ENCODE measurements at regions of chr16 and their contacts with region 1.

Region 1: GRCh38 chr16:81403616-81404373 is 40.8 kb upstream of the CMIP start:
- DNase-seq: peak; percentile 72 to 83
- H3K4me3 ChIP-seq: peak overlapping the region in 2 of 3 donors; percentile 22 to 59
- H3K27ac ChIP-seq: no peak overlapping the region
- H3K4me1 ChIP-seq: peaks cover 0 to 3% of the 10 kb centered on the region in 2 donors
- H3K27me3 ChIP-seq: no peaks in the 10 kb centered on the region
- CTCF ChIP-seq: peak; percentile 91 to 97 (median 96)
- POLR2A ChIP-seq: no peak

Region 2: GRCh38 chr16:81703177-81704155 is 299.7 kb after region 1 on chr16:
- intact Hi-C with region 1: loop called (anchors 10 kb)
- DNase-seq: no peak
- H3K4me3 ChIP-seq: no peak overlapping the region
- H3K27ac ChIP-seq: no peak overlapping the region
- H3K4me1 ChIP-seq: no peaks in the 10 kb centered on the region
- H3K27me3 ChIP-seq: no peaks in the 10 kb centered on the region
- CTCF ChIP-seq: no peak
- POLR2A ChIP-seq: no peak

Region 3: DNA sequence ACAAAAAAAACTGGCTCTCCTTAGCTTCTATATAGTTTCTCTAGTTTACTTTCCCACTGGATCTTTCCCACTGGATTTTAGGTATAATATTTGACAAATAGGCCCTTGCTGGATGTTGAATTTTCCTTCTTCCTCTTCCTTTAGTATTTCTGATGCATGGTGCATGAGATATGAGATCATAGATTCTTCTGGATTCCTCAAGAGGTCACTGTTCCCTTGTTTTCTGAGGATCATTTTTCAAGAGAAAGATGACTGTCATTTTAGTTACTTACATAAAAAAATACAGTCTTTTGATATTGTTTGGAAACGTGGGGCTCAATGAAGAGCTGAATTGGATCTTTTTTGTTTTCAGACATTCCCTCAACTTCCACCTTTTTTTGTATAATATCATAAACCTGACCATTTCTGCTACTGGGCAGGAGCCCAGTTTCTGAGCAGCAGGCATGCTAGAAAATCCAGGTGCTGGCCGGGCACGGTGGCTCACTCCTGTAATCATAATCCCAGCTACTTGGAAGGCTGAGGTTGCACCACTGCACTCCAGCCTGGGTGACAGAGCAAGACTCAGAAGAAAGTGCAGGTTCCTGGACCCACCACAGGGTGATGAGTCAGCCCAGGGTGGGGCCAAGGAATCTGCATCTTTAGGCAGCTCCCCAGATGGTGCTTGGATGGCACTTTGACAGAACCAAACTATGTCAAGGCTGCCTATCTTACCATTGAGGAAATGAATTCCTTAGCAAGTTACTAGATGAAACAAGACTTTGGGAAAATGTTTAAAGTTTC is 537.2 kb after region 1 on chr16:
- intact Hi-C with region 1: no loop called
- DNase-seq: no peak
- H3K4me3 ChIP-seq: no peak overlapping the region
- H3K27ac ChIP-seq: no peak overlapping the region
- H3K4me1 ChIP-seq: no peaks in the 10 kb centered on the region
- H3K27me3 ChIP-seq: no peaks in the 10 kb centered on the region
- CTCF ChIP-seq: peak in 1 of 3 donors; percentile 29
- POLR2A ChIP-seq: no peak